CD4-positive, alpha-beta memory T cell (primary cell): ENCODE measurements at regions of chr17 and their contacts with region 1.

Region 1: GRCh38 chr17:59619293-59620063 is at the start of gene CLTC:
- DNase-seq: peak; percentile 95 to 97 (median 96)
- H3K4me3 ChIP-seq: peak within 1 kb of the TSS; percentile 89 to 98
- H3K4me3 Mint-ChIP-seq: peak within 1 kb of the TSS; percentile 92 to 99 (median 97)
- H3K27ac ChIP-seq: peak within 1 kb of the TSS; percentile 96
- H3K27ac Mint-ChIP-seq: peak within 1 kb of the TSS; percentile 97 to 99 (median 99)
- H3K4me1 ChIP-seq: peaks cover 49% of the 10 kb centered on the region
- H3K4me1 Mint-ChIP-seq: peaks cover 28 to 69% (median 44%) of the 10 kb centered on the region in 4 donors
- H3K27me3 ChIP-seq: no peaks in the 10 kb centered on the region
- H3K27me3 Mint-ChIP-seq: no peaks in the 10 kb centered on the region
- total RNA-seq, gene CLTC: 115 to 118 TPM

Region 2: DNA sequence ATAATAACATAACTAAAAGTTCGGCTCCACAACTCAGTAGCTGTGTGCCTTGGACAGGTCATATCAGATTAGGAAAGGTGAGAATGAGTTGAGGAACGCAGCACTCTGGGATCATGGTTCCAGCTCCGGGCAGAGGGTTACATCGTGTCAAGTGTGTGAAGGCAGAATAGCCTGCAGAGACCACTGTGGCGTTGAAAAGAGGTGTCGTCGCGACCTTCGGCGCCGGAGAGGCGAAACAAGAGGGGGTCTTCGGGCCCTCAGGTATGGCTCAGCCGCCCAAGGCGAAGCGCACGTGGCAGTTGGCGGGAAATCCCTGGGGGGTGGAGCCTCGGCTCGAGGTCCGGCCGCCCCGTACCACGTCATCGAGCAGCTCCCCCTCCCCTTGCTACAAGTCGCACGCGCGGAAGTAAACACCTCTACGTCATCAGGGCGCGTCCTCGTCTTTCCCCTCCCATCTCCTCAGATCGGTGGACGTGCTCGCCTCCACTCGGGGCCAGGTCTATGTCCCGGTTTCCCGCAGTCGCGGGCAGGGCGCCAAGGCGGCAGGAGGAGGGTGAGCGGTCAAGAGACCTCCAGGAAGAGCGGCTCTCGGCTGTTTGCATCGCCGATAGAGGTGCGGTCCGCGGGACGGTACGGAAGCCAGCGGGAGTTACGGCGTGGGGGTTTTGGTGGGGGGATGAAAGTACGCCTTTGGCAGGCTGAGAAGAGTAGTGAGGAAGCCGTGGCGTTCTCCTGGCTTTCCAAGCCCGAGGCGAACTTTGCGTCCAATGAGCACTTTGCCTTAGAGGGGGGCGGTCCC is 54.1 kb before region 1 on chr17 and contains the start of gene DHX40:
- CTCF ChIA-PET with region 1: interaction called, 3 read pairs
- POLR2A ChIA-PET with region 1: interaction called, 62 read pairs
- intact Hi-C with region 1: loop called (anchors 1 kb)
- DNase-seq: peak; percentile 92 to 96 (median 93)
- H3K4me3 ChIP-seq: peak within 1 kb of the TSS; percentile 79 to 93
- H3K4me3 Mint-ChIP-seq: peak within 1 kb of the TSS; percentile 97 to 100 (median 100)
- H3K27ac ChIP-seq: peak within 1 kb of the TSS; percentile 93
- H3K27ac Mint-ChIP-seq: peak within 1 kb of the TSS; percentile 93 to 100 (median 100)
- H3K4me1 ChIP-seq: peaks cover 18% of the 10 kb centered on the region
- H3K4me1 Mint-ChIP-seq: peaks cover 15 to 25% (median 21%) of the 10 kb centered on the region in 4 donors
- H3K27me3 ChIP-seq: no peaks in the 10 kb centered on the region
- H3K27me3 Mint-ChIP-seq: no peaks in the 10 kb centered on the region
- total RNA-seq, gene DHX40: 25.4 to 29.9 TPM

Region 3: GRCh38 chr17:59641799-59642489 is 22.5 kb after region 1 on chr17:
- CTCF ChIA-PET with region 1: interaction called, 4 read pairs
- POLR2A ChIA-PET with region 1: interaction called, 15 read pairs
- intact Hi-C with region 1: loop called (anchors 1 kb)
- DNase-seq: peak in 4 of 5 donors; percentile 32 to 42 (median 34)
- H3K4me3 ChIP-seq: no peak overlapping the region
- H3K4me3 Mint-ChIP-seq: peak overlapping the region; percentile 49 to 77 (median 71)
- H3K27ac ChIP-seq: no peak overlapping the region
- H3K27ac Mint-ChIP-seq: peak overlapping the region in 6 of 7 donors; percentile 7 to 81 (median 72)
- H3K4me1 ChIP-seq: peaks cover 57% of the 10 kb centered on the region
- H3K4me1 Mint-ChIP-seq: peaks cover 39 to 67% (median 52%) of the 10 kb centered on the region in 4 donors
- H3K27me3 ChIP-seq: no peaks in the 10 kb centered on the region
- H3K27me3 Mint-ChIP-seq: no peaks in the 10 kb centered on the region

Region 4: GRCh38 chr17:59707114-59707970 is 87.9 kb after region 1 on chr17 and contains the starts of genes PTRH2 and VMP1:
- CTCF ChIA-PET with region 1: no interaction called
- POLR2A ChIA-PET with region 1: interaction called, 34 read pairs
- intact Hi-C with region 1: loop called (anchors 1 kb)
- DNase-seq: peak; percentile 85 to 98 (median 89)
- H3K4me3 ChIP-seq: peak within 1 kb of the TSS; percentile 97 to 99
- H3K4me3 Mint-ChIP-seq: peak within 1 kb of the TSS; percentile 97 to 100 (median 98)
- H3K27ac ChIP-seq: peak within 1 kb of the TSS; percentile 98
- H3K27ac Mint-ChIP-seq: peak within 1 kb of the TSS; percentile 97 to 100 (median 99)
- H3K4me1 ChIP-seq: peaks cover 57% of the 10 kb centered on the region
- H3K4me1 Mint-ChIP-seq: peaks cover 41 to 81% (median 54%) of the 10 kb centered on the region in 4 donors
- H3K27me3 ChIP-seq: no peaks in the 10 kb centered on the region
- H3K27me3 Mint-ChIP-seq: no peaks in the 10 kb centered on the region
- total RNA-seq, gene PTRH2: 17.3 to 17.8 TPM
- total RNA-seq, gene VMP1: 106 to 113 TPM

Region 5: DNA sequence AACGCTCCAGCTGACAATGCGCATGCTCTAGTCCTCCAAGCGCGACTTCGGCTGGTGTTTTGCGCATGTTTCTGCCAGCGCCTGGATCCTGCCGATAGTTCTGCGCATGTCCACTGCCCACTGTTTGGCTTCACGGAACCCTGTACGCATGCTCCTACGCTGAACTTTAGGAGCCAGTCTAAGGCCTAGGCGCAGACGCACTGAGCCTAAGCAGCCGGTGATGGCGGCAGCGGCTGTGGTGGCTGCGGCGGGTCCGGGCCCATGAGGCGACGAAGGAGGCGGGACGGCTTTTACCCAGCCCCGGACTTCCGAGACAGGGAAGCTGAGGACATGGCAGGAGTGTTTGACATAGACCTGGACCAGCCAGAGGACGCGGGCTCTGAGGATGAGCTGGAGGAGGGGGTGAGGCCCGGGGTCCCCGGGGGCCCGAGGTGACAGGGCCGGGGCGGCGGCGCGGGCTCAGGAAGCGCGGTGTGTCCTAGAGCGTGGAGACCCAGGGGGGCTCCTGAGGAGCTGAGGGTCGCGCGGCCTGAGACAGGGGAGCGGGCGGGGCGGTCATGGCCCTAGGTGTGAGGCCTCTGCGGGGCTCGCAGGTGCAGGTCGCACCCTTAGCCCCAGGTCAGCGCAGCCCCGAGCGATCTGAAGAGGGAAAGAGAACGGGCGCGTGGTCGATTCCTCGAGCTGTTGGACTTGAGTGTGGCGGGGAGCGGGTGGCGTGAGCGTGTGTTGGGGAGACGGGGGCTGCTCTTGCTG is 273.6 kb after region 1 on chr17 and contains the starts of genes RPS6KB1 and TUBD1:
- CTCF ChIA-PET with region 1: no interaction called
- POLR2A ChIA-PET with region 1: interaction called, 20 read pairs
- intact Hi-C with region 1: loop called (anchors 1 kb)
- DNase-seq: peak; percentile 96 to 99 (median 98)
- H3K4me3 ChIP-seq: peak within 1 kb of the TSS; percentile 68 to 83
- H3K4me3 Mint-ChIP-seq: peak within 1 kb of the TSS; percentile 99 to 100 (median 100)
- H3K27ac ChIP-seq: peak within 1 kb of the TSS; percentile 96
- H3K27ac Mint-ChIP-seq: peak within 1 kb of the TSS; percentile 93 to 100 (median 99)
- H3K4me1 ChIP-seq: peaks cover 51% of the 10 kb centered on the region
- H3K4me1 Mint-ChIP-seq: peaks cover 35 to 67% (median 50%) of the 10 kb centered on the region in 4 donors
- H3K27me3 ChIP-seq: no peaks in the 10 kb centered on the region
- H3K27me3 Mint-ChIP-seq: no peaks in the 10 kb centered on the region
- total RNA-seq, gene RPS6KB1: 57.2 to 67.4 TPM
- total RNA-seq, gene TUBD1: 42.4 to 44.0 TPM